AG04449 (cell line): ENCODE measurements at regions of chr3 and their contacts with region 1.

Region 1: DNA sequence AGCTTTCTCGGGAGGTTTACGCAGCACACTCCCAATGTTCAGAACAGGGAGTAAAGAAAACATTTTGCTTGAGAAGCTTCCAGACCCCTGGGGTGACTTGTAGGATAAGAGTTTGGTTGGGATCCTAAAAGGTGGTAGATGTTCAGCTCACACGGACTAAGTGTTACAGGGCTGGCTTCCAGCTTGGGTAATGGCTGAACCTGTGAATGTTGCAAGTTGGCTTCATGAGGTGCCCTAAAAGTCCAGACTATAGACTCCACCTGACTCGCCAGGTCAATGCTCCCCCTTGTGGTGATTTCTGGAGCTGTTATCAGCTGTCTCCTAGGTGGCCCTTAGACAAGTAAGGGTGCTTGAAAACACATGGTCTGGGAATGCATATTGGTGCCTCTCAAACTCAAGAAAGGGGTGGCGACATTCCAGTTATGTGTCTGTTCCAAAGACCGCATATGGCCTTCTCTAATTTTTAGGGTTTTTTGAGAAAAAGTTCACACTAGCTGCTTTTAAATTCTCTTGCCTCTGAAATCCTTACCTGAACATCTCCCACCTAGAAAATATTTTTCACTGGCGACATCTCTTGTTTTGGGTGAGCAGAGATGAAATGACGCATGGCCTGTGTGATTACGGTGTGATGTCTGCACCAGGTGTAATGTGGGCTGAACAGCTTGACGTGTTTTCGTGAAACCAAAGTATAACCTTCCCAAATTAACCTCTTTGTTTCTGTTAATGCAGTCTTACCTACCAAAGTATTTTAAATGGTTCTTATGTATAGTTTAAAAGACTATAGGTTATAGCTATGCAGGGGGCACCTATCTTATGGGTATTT is 175.7 kb upstream of the KBTBD8 start:
- DNase-seq: no peak
- H3K4me3 ChIP-seq: no peak overlapping the region
- CTCF ChIP-seq: peak; percentile 77

Region 2: GRCh38 chr3:66253790-66254620 is 568.4 kb before region 1 on chr3:
- CTCF ChIA-PET with region 1: interaction called, 223 read pairs
- POLR2A ChIA-PET with region 1: no interaction called
- DNase-seq: no peak
- H3K4me3 ChIP-seq: no peak overlapping the region
- CTCF ChIP-seq: peak; percentile 43

Region 3: GRCh38 chr3:66267031-66267430 is 555.4 kb before region 1 on chr3:
- CTCF ChIA-PET with region 1: interaction called, 56 read pairs
- POLR2A ChIA-PET with region 1: no interaction called
- DNase-seq: no peak
- H3K4me3 ChIP-seq: no peak overlapping the region
- CTCF ChIP-seq: no peak

Region 4: GRCh38 chr3:66378256-66378823 is 444.1 kb before region 1 on chr3:
- CTCF ChIA-PET with region 1: interaction called, 23 read pairs
- POLR2A ChIA-PET with region 1: no interaction called
- DNase-seq: no peak
- H3K4me3 ChIP-seq: no peak overlapping the region
- CTCF ChIP-seq: peak; percentile 51

Region 5: DNA sequence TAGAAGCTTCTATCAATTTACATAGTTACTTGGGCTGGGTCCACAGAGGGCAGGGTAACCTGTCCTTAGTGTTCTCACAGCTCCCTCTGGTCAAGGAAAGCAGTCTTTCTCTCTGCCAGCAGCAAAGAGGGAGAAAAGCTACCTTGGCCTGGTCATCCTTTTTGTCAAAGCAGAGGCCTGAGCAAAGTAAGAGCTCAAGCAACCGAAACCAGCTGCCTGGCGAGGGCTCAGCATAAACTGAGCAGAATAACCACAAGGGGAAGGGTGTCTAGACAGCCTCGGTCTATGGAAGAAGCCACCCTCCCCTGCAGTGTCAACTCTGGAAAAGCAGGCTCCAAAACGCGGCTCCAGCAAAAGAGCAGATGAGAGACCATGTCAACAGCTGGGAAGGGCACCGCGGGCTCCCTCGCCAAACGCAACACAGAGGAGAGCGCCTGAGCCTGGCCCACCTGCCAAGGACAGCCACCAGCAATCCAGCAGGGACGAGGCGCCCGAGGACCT is 338.9 kb before region 1 on chr3:
- CTCF ChIA-PET with region 1: interaction called, 13 read pairs
- POLR2A ChIA-PET with region 1: no interaction called
- DNase-seq: no peak
- H3K4me3 ChIP-seq: no peak overlapping the region
- CTCF ChIP-seq: no peak

Region 6: DNA sequence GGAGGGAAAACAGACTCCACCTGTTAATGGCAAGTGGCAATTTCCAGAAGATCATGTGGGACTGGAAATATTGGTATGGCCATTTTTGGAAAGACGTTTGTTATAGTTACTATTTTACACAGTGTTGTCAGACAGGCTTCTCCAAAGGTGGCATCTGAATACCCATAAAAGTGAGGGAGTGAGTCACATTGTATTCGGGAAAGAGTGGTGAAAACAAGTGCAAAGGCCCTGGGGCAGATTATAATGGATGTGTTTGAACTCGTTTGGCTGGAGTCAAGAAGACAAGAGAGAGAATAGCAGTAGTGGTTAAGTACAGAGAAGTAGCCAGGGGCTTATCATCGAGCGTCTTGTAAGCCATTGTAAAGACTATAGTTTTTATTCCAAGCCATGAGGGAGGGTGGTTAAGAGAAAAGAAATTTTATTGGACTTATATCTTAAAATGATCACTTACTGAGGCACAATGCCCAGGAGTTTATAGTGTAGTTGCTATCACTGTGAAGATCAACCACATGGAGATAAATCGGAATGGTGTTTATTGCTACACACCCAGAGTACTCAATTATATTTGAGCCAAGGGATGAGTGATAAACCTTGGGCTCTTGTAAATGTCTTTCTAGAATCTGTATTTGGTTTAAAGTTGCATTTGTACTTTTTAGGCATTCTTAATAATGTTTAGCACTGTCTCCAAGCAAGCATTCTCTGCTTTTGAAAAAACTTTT is 37.0 kb before region 1 on chr3:
- CTCF ChIA-PET with region 1: no interaction called
- POLR2A ChIA-PET with region 1: no interaction called
- DNase-seq: no peak
- H3K4me3 ChIP-seq: no peak overlapping the region
- CTCF ChIP-seq: no peak

Region 7: DNA sequence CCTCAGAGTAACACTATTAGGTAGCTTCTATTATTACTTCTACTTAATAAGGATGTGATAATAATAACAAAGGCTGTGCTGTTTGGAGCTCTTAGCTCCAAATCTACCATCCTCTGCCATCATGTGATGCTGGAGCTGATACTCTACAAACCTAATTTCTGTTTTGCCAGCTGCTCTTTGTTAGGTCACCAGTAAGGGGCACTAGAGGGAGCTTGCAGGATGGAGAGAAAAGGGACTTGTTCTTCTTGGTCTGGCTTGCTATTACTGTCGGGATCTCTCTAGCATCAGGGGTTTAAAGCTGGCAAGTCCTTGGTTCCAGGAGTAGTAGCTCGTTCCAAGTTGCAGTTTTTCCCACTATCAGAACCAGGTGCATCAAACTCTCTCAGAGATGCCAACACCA is 19.2 kb before region 1 on chr3:
- CTCF ChIA-PET with region 1: interaction called, 14 read pairs
- POLR2A ChIA-PET with region 1: no interaction called
- DNase-seq: no peak
- H3K4me3 ChIP-seq: no peak overlapping the region
- CTCF ChIP-seq: no peak